ENCODE measurements at regions of chrX and their contacts with region 1.

Region 1: GRCh38 chrX:119791438-119792231 is at the start of gene RPL39:
- DNase-seq: peak; percentile 65 to 93 (median 74)
- ATAC-seq: peak; percentile 95
- H3K4me3 ChIP-seq: peak within 1 kb of the TSS; percentile 97
- H3K27ac ChIP-seq: peak within 1 kb of the TSS; percentile 97
- H3K4me1 ChIP-seq: peaks cover 6 to 7% of the 10 kb centered on the region in 2 experiments; a peak in 3 of 5 replicates
- H3K27me3 ChIP-seq: no peaks in the 10 kb centered on the region
- CTCF ChIP-seq: no peak
- EP300 ChIP-seq: peak; percentile 41
- POLR2A ChIP-seq: peak; percentile 98
- RAD21 ChIP-seq: no peak
- polyA plus RNA-seq, gene RPL39: 3,226 to 3,583 TPM

Region 2: GRCh38 chrX:119775517-119776238 is 16.0 kb before region 1 on chrX:
- CTCF ChIA-PET with region 1: no interaction called
- POLR2A ChIA-PET with region 1: interaction called, 10 read pairs
- in situ Hi-C with region 1: no loop called
- intact Hi-C with region 1: no loop called
- DNase-seq: no peak
- ATAC-seq: no peak
- H3K4me3 ChIP-seq: no peak overlapping the region
- H3K27ac ChIP-seq: no peak overlapping the region
- H3K4me1 ChIP-seq: no peaks in the 10 kb centered on the region; a peak in 1 of 5 replicates
- H3K27me3 ChIP-seq: no peaks in the 10 kb centered on the region
- CTCF ChIP-seq: no peak
- EP300 ChIP-seq: no peak
- POLR2A ChIP-seq: no peak
- RAD21 ChIP-seq: no peak

Region 3: GRCh38 chrX:119817130-119817690 is 25.6 kb after region 1 on chrX:
- CTCF ChIA-PET with region 1: no interaction called
- POLR2A ChIA-PET with region 1: interaction called, 11 read pairs
- in situ Hi-C with region 1: no loop called
- intact Hi-C with region 1: no loop called
- DNase-seq: no peak
- ATAC-seq: no peak
- H3K4me3 ChIP-seq: no peak overlapping the region
- H3K27ac ChIP-seq: no peak overlapping the region
- H3K4me1 ChIP-seq: no peaks in the 10 kb centered on the region
- H3K27me3 ChIP-seq: no peaks in the 10 kb centered on the region
- CTCF ChIP-seq: no peak
- EP300 ChIP-seq: no peak
- POLR2A ChIP-seq: no peak
- RAD21 ChIP-seq: no peak

Region 4: GRCh38 chrX:119852382-119853353 is 61.0 kb after region 1 on chrX and contains the start of gene UPF3B:
- CTCF ChIA-PET with region 1: no interaction called
- POLR2A ChIA-PET with region 1: interaction called, 16 read pairs
- in situ Hi-C with region 1: no loop called
- intact Hi-C with region 1: no loop called
- DNase-seq: peak; percentile 95 to 99 (median 96)
- ATAC-seq: peak; percentile 97
- H3K4me3 ChIP-seq: peak within 1 kb of the TSS; percentile 70
- H3K27ac ChIP-seq: peak within 1 kb of the TSS; percentile 76
- H3K4me1 ChIP-seq: peaks cover 0 to 2% of the 10 kb centered on the region in 2 experiments; a peak in 1 of 5 replicates
- H3K27me3 ChIP-seq: no peaks in the 10 kb centered on the region
- CTCF ChIP-seq: no peak
- EP300 ChIP-seq: no peak; the same call in 1 of the 2 replicates
- POLR2A ChIP-seq: peak; percentile 89
- RAD21 ChIP-seq: no peak
- polyA plus RNA-seq, gene UPF3B: 24.1 to 37.5 TPM

Region 5: DNA sequence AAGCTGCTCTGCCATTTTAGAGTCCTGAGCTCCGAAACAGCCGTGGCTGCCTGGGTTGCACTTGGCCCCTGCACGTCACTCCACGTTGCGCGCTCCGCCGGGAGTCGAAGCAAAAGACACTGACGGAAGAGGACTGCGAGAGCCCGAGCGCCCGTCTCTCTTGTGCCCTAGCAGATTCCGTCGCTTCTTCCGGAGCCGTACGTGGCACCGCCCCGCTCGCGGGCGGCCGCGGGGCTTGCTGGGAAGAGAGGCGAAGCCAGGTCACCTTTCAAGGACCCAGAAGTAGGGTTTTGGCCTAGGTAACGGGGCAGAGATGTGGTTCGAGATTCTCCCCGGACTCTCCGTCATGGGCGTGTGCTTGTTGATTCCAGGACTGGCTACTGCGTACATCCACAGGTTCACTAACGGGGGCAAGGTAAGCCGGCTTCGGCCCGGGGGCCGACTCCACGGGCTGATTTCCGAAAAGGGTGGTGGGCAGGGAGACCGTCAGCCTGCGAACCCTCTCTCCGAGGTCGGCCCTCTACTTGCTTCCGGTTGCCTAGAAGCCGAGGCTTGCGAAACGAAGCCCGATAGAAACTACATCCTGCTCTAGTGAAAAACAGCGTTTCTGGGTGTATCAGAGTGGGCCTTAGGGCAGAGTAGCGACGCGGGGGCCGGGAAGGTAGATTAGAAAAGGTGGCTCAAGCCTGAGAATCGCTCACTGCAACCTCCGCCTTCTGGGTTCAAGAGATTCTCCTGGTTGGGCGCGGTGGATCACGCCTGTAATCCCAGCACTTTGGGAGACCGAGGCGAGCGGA is 80.2 kb after region 1 on chrX and contains the starts of genes NDUFA1 and RNF113A:
- CTCF ChIA-PET with region 1: no interaction called
- POLR2A ChIA-PET with region 1: interaction called, 29 read pairs
- in situ Hi-C with region 1: no loop called
- intact Hi-C with region 1: no loop called
- DNase-seq: peak; percentile 77 to 94 (median 82)
- ATAC-seq: peak; percentile 94
- H3K4me3 ChIP-seq: peak within 1 kb of the TSS; percentile 94
- H3K27ac ChIP-seq: peak within 1 kb of the TSS; percentile 99
- H3K4me1 ChIP-seq: peaks cover 0 to 6% of the 10 kb centered on the region in 2 experiments; a peak in 2 of 5 replicates
- H3K27me3 ChIP-seq: no peaks in the 10 kb centered on the region
- CTCF ChIP-seq: no peak
- EP300 ChIP-seq: 0 out of 2 replicates have a peak, but pooled peaks have one; percentile 7
- POLR2A ChIP-seq: peak; percentile 91
- RAD21 ChIP-seq: no peak
- polyA plus RNA-seq, gene NDUFA1: 1,140 to 1,285 TPM
- polyA plus RNA-seq, gene RNF113A: 23.9 to 29.4 TPM

Region 6: DNA sequence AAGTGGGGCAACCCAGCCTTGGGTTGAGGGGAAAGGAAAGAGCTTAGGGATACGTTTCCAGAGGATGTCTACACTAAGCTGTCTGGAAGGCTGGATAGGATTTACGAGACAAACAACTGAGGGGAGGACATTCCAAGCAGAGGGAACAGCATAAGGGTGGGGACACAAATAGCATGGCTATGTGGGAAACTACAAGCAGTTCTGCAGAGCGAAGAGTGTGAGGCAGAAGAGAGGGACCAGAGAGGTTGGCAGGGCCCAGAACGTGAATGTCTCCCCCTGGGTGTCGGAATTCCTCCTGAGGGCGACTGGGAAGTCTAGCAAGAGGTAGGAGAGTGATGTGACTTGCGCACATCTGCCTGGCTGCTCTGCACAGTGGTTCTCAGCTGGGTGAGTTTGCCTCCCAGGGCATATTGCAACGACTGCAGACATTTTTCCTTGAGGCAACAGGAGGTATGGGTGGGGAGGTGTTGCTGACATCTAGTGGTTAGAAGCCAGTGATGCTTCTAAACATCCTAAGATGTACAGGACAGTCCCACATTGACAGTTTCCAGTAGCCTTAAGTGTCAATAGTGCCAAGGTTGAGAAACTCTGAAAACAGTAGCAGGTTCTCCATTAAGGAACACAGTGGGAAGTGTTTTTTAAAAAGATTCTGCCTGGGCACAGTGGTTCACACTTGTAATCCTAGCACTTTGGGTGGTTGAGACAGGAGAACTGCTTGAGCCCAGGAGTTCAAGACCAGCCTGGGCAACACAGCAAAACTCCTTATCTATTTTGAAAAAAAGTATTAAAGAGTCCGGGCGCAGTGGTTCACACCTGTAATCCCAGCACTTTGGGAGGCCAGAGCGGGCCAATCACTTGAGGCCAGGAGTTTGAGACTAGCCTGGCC is 89.2 kb after region 1 on chrX:
- CTCF ChIA-PET with region 1: interaction called, 10 read pairs
- POLR2A ChIA-PET with region 1: interaction called, 8 read pairs
- in situ Hi-C with region 1: no loop called
- intact Hi-C with region 1: loop called (anchors 2 kb)
- DNase-seq: peak; percentile 32 to 60 (median 48)
- ATAC-seq: peak; percentile 97
- H3K4me3 ChIP-seq: no peak overlapping the region
- H3K27ac ChIP-seq: no peak overlapping the region
- H3K4me1 ChIP-seq: no peaks in the 10 kb centered on the region; a peak in 1 of 5 replicates
- H3K27me3 ChIP-seq: no peaks in the 10 kb centered on the region
- CTCF ChIP-seq: peak; percentile 68 to 78 (median 73)
- EP300 ChIP-seq: no peak
- POLR2A ChIP-seq: 0 out of 2 replicates have a peak, but pooled peaks have one; percentile 21
- RAD21 ChIP-seq: peak; percentile 46 to 68; a peak in 3 of 4 replicates